ENCODE measurements at regions of chr11 and their contacts with region 1.

Region 1: GRCh38 chr11:27720277-27720830 is 20.1 kb upstream of the BDNF start:
- DNase-seq: peak; percentile 41 to 60
- H3K4me3 ChIP-seq: no peak overlapping the region
- H3K4me3 Mint-ChIP-seq: peak overlapping the region; percentile 90
- H3K27ac Mint-ChIP-seq: no peak overlapping the region
- H3K4me1 ChIP-seq: peaks cover 5% of the 10 kb centered on the region; the same call in 1 of the 2 replicates
- H3K4me1 Mint-ChIP-seq: peaks cover 7% of the 10 kb centered on the region
- H3K27me3 ChIP-seq: no peaks in the 10 kb centered on the region
- H3K27me3 Mint-ChIP-seq: no peaks in the 10 kb centered on the region
- CTCF ChIP-seq: no peak

Region 2: GRCh38 chr11:27612932-27613880 is 107.1 kb before region 1 on chr11:
- CTCF ChIA-PET with region 1: interaction called, 14 read pairs
- POLR2A ChIA-PET with region 1: no interaction called
- intact Hi-C with region 1: no loop called
- DNase-seq: no peak
- H3K4me3 ChIP-seq: no peak overlapping the region
- H3K4me3 Mint-ChIP-seq: no peak overlapping the region
- H3K27ac Mint-ChIP-seq: no peak overlapping the region
- H3K4me1 ChIP-seq: no peaks in the 10 kb centered on the region
- H3K4me1 Mint-ChIP-seq: no peaks in the 10 kb centered on the region
- H3K27me3 ChIP-seq: no peaks in the 10 kb centered on the region
- H3K27me3 Mint-ChIP-seq: peaks cover 18% of the 10 kb centered on the region
- CTCF ChIP-seq: no peak

Region 3: DNA sequence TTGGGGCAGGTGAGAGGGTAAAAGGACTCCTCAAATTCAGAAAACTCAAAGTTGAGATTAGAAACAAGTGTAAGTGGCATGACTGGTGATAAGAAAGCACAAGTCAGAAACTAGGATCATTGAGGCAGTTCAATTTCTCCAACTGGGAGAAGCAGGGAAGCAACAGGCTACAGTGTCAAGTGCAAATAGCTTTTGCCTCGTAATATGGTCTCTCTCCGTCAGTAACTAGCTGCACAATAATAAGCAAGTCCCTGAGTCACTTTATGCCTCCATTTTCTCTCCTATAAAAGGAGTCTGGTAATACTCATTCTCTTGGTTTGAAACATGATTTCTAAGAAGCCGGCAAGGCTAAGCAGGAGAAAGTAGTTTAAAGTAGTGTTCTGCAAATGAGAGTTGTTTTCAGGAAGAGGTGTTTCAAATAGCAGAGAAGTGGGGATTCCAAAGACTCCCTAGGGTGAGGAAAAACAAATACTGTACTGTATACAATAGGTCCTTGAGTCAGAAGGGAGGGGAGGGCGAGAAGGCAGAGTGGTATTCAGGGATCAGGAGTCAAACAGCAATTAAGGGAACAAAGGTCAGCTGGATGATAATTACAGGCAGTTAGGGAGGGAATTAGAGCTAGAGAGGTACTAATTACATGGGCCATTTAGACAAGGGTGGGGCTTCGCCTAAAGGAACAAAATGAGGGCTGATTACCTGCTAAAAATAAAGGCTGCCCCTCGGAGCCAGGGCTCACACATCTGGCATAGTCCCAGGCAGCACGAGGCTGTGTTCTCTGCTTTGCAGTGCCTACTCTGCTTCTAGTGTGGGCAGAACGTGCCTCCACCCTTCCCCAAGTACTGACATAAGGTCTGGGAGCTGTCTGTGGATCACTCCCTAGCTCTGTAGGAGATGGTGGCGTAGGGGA is 75.9 kb after region 1 on chr11:
- CTCF ChIA-PET with region 1: no interaction called
- POLR2A ChIA-PET with region 1: no interaction called
- intact Hi-C with region 1: loop called (anchors 2 kb)
- DNase-seq: peak; percentile 41 to 51
- H3K4me3 ChIP-seq: no peak overlapping the region
- H3K4me3 Mint-ChIP-seq: peak overlapping the region; percentile 53
- H3K27ac Mint-ChIP-seq: peak overlapping the region; percentile 46
- H3K4me1 ChIP-seq: peaks cover 15% of the 10 kb centered on the region
- H3K4me1 Mint-ChIP-seq: peaks cover 31% of the 10 kb centered on the region
- H3K27me3 ChIP-seq: no peaks in the 10 kb centered on the region
- H3K27me3 Mint-ChIP-seq: no peaks in the 10 kb centered on the region
- CTCF ChIP-seq: no peak

Region 4: DNA sequence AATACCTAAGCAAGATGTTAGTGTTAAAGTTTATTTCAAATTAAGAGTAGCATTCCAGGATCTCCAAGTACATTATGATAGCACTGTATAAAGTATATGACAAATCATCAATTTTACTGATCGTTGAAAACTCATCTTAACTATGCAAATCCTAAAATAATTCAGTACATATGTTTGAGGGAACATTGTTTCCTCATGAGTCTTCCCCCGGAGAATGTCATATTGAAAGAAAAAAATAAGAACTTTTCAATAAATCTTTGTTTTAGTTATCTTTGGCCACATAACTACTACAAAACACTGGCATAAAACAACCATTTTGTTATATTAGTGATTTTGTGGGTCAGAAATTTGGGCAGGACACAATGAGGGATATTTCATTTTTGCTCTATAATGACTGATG is 523.2 kb after region 1 on chr11:
- CTCF ChIA-PET with region 1: no interaction called
- POLR2A ChIA-PET with region 1: no interaction called
- intact Hi-C with region 1: no loop called
- DNase-seq: no peak
- H3K4me3 ChIP-seq: no peak overlapping the region
- H3K4me3 Mint-ChIP-seq: no peak overlapping the region
- H3K27ac Mint-ChIP-seq: no peak overlapping the region
- H3K4me1 ChIP-seq: peaks cover 6% of the 10 kb centered on the region; the same call in 1 of the 2 replicates
- H3K4me1 Mint-ChIP-seq: peaks cover 12% of the 10 kb centered on the region
- H3K27me3 ChIP-seq: no peaks in the 10 kb centered on the region
- H3K27me3 Mint-ChIP-seq: no peaks in the 10 kb centered on the region
- CTCF ChIP-seq: no peak

Measured in Caco-2 (cell line).